ENCODE measurements at regions of chr14 and their contacts with region 1.

Region 1: GRCh38 chr14:52131640-52132320 is 62.9 kb upstream of the NID2 start:
- DNase-seq: peak; percentile 62 to 84
- H3K4me3 ChIP-seq: no peak overlapping the region
- H3K27ac ChIP-seq: no peak overlapping the region
- H3K4me1 ChIP-seq: no peaks in the 10 kb centered on the region
- H3K27me3 ChIP-seq: no peaks in the 10 kb centered on the region
- CTCF ChIP-seq: peak; percentile 68 to 86 (median 85)
- EP300 ChIP-seq: no peak
- POLR2A ChIP-seq: no peak
- RAD21 ChIP-seq: peak; percentile 93 to 95

Region 2: GRCh38 chr14:51996148-51996746 is 135.5 kb before region 1 on chr14:
- CTCF ChIA-PET with region 1: interaction called, 11 read pairs
- POLR2A ChIA-PET with region 1: interaction called, 3 read pairs
- DNase-seq: no peak
- H3K4me3 ChIP-seq: no peak overlapping the region
- H3K27ac ChIP-seq: no peak overlapping the region
- H3K4me1 ChIP-seq: no peaks in the 10 kb centered on the region
- H3K27me3 ChIP-seq: no peaks in the 10 kb centered on the region
- CTCF ChIP-seq: peak in 2 of 3 experiments; percentile 21 to 48; a peak in 2 of 4 replicates
- EP300 ChIP-seq: no peak
- POLR2A ChIP-seq: no peak
- RAD21 ChIP-seq: peak; percentile 57 to 66

Region 3: GRCh38 chr14:52021957-52022600 is 109.7 kb before region 1 on chr14:
- CTCF ChIA-PET with region 1: interaction called, 10 read pairs
- POLR2A ChIA-PET with region 1: no interaction called
- DNase-seq: no peak
- H3K4me3 ChIP-seq: no peak overlapping the region
- H3K27ac ChIP-seq: no peak overlapping the region
- H3K4me1 ChIP-seq: peaks cover 0 to 7% (median 4%) of the 10 kb centered on the region in 4 experiments; a peak in 2 of 7 replicates
- H3K27me3 ChIP-seq: no peaks in the 10 kb centered on the region
- CTCF ChIP-seq: no peak
- EP300 ChIP-seq: no peak
- POLR2A ChIP-seq: no peak
- RAD21 ChIP-seq: no peak

Region 4: GRCh38 chr14:52272375-52272774 is 140.6 kb after region 1 on chr14:
- CTCF ChIA-PET with region 1: interaction called, 20 read pairs
- POLR2A ChIA-PET with region 1: no interaction called
- DNase-seq: peak in 1 of 2 experiments; percentile 50
- H3K4me3 ChIP-seq: no peak overlapping the region
- H3K27ac ChIP-seq: no peak overlapping the region
- H3K4me1 ChIP-seq: peaks cover 3 to 10% (median 4%) of the 10 kb centered on the region in 4 experiments; a peak in 6 of 7 replicates
- H3K27me3 ChIP-seq: peaks cover 17 to 30% (median 27%) of the 10 kb centered on the region in 4 experiments
- CTCF ChIP-seq: peak; percentile 11 to 85 (median 59)
- EP300 ChIP-seq: no peak
- POLR2A ChIP-seq: no peak
- RAD21 ChIP-seq: peak; percentile 73 to 75